ENCODE measurements at regions of chr4 and their contacts with region 1.

Region 1: DNA sequence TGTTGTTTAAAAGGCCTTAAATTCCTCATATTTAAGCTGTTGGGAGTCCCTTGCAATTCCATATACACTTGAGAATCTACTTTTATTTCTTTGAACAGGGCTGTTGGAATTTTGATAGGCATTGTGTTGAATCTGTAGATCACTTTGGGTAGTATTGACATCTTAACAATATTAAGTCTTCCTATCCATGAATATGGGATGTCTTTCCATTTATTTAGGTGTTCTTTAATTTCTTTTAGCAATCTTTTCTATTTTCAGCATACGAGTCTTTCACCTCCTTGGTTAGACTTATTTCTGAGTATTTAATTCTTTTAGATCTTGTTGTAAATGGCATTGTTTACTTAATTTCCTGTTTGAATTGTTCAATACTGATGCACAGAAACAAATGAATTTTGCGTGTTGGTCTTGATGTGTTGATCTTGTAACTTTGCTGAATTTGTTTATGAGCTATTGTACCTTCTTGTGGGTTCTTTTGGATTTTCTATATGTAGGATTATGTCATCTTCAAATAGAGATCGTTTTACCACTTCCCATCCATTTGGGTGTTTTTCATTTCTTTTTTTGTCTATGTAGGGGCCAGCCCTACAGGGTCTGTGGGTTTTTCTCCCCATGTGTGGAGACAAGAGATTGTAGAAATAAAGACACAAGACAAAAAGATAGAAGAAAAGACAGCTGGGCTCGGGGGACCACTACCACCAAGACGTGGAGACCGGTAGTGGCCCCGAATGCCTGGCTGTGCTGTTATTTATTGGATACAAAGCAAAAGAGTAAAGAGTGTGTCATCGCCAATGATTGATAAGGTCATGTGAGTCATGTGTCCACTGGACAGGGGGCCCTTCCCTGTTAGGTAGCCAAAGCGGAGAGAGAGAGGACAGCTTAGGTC is 18.2 kb upstream of the CTBP1 start:
- DNase-seq: no peak
- ATAC-seq: peak; percentile 53
- H3K4me3 ChIP-seq: peak overlapping the region in 4 of 5 experiments; percentile 28 to 52 (median 42)
- H3K4me3 Mint-ChIP-seq: peak overlapping the region; percentile 92
- H3K27ac ChIP-seq: peak overlapping the region; percentile 76 to 82
- H3K27ac Mint-ChIP-seq: peak overlapping the region; percentile 95
- H3K4me1 ChIP-seq: peaks cover 16 to 17% of the 10 kb centered on the region in 2 donors
- H3K4me1 Mint-ChIP-seq: peaks cover 32% of the 10 kb centered on the region
- H3K27me3 ChIP-seq: no peaks in the 10 kb centered on the region
- H3K27me3 Mint-ChIP-seq: no peaks in the 10 kb centered on the region
- CTCF ChIP-seq: no peak

Region 2: DNA sequence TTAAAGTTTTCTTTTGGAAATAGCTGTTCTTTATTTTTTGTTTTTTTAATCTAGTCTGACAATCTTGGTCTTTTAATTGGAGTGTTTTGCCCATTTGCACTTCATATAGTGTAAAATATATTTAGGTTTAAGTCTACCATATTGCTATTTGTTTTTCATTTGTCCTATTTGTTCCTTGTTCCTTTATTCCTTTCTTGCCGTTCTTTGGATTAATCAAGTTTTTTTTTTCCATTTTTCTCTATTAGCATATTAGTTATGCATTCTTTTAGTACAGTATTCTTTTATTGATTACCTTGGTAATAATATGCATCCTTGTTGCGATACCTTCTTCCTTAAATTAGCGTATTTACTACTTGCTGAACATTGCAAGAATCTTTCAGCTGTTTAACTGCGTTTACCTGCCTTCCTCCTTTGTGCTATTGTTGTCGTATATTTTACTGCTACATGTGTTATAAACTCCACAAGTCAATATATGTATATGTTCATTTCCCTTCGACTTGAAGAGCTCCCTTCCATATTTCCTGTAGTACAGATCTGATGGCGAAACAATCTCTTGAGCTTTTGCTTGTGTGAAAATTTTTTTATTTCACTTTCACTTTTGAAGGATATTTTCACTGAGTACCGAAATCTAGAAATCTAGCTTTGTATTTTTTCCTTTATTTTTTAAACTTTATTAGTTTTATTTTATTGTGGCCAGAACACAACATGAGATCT is 129.9 kb before region 1 on chr4:
- CTCF ChIA-PET with region 1: interaction called, 88 read pairs
- POLR2A ChIA-PET with region 1: no interaction called
- intact Hi-C with region 1: no loop called
- DNase-seq: peak; percentile 41
- ATAC-seq: no peak
- H3K4me3 ChIP-seq: peak overlapping the region; percentile 35 to 63 (median 38)
- H3K4me3 Mint-ChIP-seq: peak overlapping the region; percentile 81
- H3K27ac ChIP-seq: peak overlapping the region in 1 of 2 donors; percentile 58
- H3K27ac Mint-ChIP-seq: peak overlapping the region; percentile 22
- H3K4me1 ChIP-seq: peaks cover 36% of the 10 kb centered on the region in 2 donors
- H3K4me1 Mint-ChIP-seq: peaks cover 34% of the 10 kb centered on the region
- H3K27me3 ChIP-seq: no peaks in the 10 kb centered on the region
- H3K27me3 Mint-ChIP-seq: peaks cover 11% of the 10 kb centered on the region
- CTCF ChIP-seq: no peak

Region 3: DNA sequence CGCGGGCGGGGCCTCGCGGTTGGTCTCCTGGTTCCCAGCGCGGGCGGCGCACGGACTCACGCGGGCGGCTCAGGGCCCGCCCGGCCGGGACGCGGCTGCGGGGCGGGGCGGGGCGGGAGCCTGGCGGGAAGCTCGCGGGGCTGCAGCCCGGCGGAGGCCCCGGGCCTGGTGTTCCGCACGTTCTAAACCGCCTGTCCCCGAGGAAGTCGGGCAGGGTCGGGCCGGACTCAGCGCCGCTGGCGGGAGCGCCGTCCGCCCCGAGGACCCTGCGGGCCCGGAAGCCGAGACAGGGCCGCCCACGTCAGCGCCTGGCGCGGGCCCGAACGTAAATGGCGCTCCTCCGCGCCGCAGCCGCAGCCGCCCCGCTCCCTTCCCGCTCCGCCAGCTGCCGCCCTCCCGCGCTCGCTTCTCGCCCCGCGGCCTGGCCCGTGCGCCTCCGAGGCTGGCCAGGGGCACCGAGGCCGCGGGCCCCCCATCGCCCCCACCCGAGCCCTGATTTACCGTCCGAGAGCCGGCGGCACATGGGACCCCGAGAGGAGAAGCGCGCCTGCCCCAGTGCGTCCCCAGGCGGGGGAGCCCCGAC is 17.9 kb before region 1 on chr4:
- CTCF ChIA-PET with region 1: interaction called, 20 read pairs
- POLR2A ChIA-PET with region 1: interaction called, 16 read pairs
- intact Hi-C with region 1: loop called (anchors 1 kb)
- DNase-seq: peak; percentile 95
- ATAC-seq: peak; percentile 73
- H3K4me3 ChIP-seq: peak overlapping the region; percentile 23 to 81 (median 62)
- H3K4me3 Mint-ChIP-seq: peak overlapping the region; percentile 92
- H3K27ac ChIP-seq: peak overlapping the region; percentile 84 to 85
- H3K27ac Mint-ChIP-seq: peak overlapping the region; percentile 97
- H3K4me1 ChIP-seq: peaks cover 47 to 57% of the 10 kb centered on the region in 2 donors
- H3K4me1 Mint-ChIP-seq: peaks cover 60% of the 10 kb centered on the region
- H3K27me3 ChIP-seq: no peaks in the 10 kb centered on the region
- H3K27me3 Mint-ChIP-seq: no peaks in the 10 kb centered on the region
- CTCF ChIP-seq: no peak

Region 4: DNA sequence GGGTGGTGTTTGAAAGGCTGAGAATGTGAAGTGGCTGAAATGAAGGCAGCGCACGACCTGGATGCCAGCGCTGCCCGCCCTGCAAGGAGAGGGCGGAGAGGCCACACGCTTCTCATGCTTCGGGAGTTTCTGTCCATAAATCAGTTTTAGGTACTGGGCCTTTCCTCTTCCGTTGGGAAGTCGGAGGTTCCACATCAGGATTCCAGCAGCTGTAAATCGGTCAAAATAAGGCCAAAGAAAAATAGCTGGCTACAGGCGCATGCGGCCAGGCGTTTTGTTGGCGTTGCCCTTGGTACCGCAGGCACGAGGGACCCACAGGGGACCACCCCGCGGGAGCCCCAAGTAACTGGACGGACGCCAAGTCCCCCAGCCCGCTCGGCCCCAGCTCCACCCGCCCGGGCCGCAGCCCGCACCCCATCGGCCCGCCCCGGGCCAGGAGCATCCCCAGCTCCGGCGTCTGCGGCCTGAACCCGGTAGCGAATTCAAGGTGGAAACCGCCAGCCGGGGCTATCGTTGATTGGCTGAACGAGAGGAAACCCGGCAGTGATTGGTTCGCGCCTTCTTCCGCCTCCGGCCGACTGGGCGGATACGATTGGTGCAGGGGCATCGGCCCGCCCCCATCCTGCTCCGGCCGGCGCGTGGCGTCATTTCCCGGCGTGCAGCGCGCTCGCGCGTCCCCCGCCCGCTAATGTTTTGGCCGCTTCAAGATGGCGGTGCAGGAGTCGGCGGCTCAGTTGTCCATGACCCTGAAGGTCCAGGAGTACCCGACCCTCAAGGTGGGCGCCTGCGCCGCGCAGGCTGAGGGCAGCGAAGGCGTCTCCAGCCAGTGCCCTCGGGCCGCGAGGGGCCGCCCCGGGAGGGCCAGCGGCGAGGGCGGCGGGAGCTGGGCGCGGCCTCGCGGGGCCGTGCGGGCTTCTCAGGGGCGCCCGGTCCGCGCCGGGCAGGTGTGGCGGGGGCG is 22.4 kb after region 1 on chr4 and contains the start of gene MAEA:
- CTCF ChIA-PET with region 1: interaction called, 14 read pairs
- POLR2A ChIA-PET with region 1: no interaction called
- intact Hi-C with region 1: loop called (anchors 1 kb)
- DNase-seq: peak; percentile 97
- ATAC-seq: peak; percentile 97
- H3K4me3 ChIP-seq: peak within 1 kb of the TSS; percentile 66 to 83 (median 79)
- H3K4me3 Mint-ChIP-seq: peak within 1 kb of the TSS; percentile 94
- H3K27ac ChIP-seq: peak within 1 kb of the TSS; percentile 65 to 88
- H3K27ac Mint-ChIP-seq: peak within 1 kb of the TSS; percentile 86
- H3K4me1 ChIP-seq: peaks cover 34 to 43% of the 10 kb centered on the region in 2 donors
- H3K4me1 Mint-ChIP-seq: peaks cover 38% of the 10 kb centered on the region
- H3K27me3 ChIP-seq: no peaks in the 10 kb centered on the region
- H3K27me3 Mint-ChIP-seq: no peaks in the 10 kb centered on the region
- CTCF ChIP-seq: no peak
- total RNA-seq, gene MAEA: 103 and 106 TPM in 2 replicates

Region 5: DNA sequence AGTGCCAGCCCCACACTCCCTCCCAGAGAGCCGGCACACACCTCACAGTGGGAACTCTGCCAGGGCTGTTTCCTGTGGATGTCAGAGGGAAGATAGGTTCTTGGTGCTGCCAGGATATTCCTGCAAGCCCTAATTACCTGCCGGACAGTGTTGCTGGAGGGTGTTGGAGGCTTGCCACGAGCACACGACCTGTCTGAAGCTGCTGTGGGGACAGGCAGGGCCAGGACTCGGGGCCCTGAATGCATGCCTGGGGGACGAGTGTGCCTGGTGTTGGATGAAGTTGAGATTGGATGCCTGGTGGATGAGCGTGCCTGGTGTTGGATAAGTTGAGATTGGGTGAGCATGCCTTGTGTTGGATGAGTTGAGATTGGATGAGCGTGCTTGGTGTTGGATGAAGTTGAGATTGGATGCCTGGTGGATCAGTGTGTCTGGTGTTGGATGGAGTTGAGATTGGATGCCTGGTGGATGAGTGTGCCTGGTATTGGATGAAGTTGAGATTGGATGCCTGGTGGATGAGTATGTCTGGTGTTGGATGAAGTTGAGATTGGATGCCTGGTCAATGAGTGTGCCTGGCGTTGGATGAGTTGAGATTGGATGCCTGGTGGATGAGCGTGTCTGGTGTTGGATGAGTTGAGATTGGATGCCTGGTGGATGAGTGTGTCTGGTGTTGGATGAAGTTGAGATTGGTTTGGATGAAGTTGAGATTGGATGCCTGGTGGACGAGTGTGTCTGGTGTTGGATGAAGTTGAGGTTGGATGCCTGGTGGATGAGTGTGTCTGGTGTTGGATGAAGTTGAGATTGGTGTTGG is 56.7 kb after region 1 on chr4:
- CTCF ChIA-PET with region 1: no interaction called
- POLR2A ChIA-PET with region 1: no interaction called
- intact Hi-C with region 1: no loop called
- DNase-seq: no peak
- ATAC-seq: no peak
- H3K4me3 ChIP-seq: no peak overlapping the region
- H3K4me3 Mint-ChIP-seq: no peak overlapping the region
- H3K27ac ChIP-seq: no peak overlapping the region
- H3K27ac Mint-ChIP-seq: no peak overlapping the region
- H3K4me1 ChIP-seq: no peaks in the 10 kb centered on the region
- H3K4me1 Mint-ChIP-seq: no peaks in the 10 kb centered on the region
- H3K27me3 ChIP-seq: no peaks in the 10 kb centered on the region
- H3K27me3 Mint-ChIP-seq: no peaks in the 10 kb centered on the region
- CTCF ChIP-seq: no peak

Region 6: DNA sequence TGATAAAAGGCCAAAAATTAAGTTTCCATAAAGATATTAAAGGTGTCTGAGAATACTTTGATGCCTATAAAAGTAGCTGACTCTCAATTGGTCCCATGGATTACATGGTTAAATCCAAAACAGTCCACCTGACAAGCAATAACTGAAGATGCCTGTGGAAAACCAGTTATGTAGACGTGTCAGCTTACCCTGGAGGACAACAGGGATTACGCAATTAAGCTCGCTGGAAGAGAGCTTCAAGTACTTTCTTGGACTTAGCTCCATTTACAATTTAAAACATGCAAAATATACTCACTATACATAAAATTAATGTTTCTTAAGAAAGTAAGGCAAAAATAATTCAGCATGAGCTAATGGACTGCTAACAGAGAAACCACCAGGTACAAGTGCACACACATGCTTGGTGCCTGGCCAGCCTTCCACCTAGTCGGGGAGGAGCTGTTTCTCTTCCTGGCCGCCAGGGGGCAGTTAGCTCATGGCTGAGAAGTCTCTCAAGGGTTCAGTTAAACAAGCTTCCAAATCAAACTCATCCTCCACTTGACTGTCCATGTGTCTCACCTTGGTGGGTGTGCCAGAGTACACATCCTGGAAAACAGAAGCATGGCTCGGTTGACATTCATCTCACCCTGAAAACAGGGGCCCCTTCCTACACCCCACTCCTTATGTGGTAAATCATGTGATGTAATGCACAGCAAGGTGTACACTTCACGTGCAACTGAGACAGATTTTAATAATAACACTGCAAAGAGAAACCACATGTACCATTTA is 426.2 kb after region 1 on chr4:
- CTCF ChIA-PET with region 1: no interaction called
- POLR2A ChIA-PET with region 1: no interaction called
- intact Hi-C with region 1: no loop called
- DNase-seq: peak; percentile 87
- ATAC-seq: peak; percentile 96
- H3K4me3 ChIP-seq: no peak overlapping the region
- H3K4me3 Mint-ChIP-seq: no peak overlapping the region
- H3K27ac ChIP-seq: no peak overlapping the region
- H3K27ac Mint-ChIP-seq: peak overlapping the region; percentile 53
- H3K4me1 ChIP-seq: no peaks in the 10 kb centered on the region
- H3K4me1 Mint-ChIP-seq: peaks cover 4% of the 10 kb centered on the region
- H3K27me3 ChIP-seq: no peaks in the 10 kb centered on the region
- H3K27me3 Mint-ChIP-seq: no peaks in the 10 kb centered on the region
- CTCF ChIP-seq: peak; percentile 93